Natural killer cell (primary cell): ENCODE measurements at regions of chr10 and their contacts with region 1.

Region 1: DNA sequence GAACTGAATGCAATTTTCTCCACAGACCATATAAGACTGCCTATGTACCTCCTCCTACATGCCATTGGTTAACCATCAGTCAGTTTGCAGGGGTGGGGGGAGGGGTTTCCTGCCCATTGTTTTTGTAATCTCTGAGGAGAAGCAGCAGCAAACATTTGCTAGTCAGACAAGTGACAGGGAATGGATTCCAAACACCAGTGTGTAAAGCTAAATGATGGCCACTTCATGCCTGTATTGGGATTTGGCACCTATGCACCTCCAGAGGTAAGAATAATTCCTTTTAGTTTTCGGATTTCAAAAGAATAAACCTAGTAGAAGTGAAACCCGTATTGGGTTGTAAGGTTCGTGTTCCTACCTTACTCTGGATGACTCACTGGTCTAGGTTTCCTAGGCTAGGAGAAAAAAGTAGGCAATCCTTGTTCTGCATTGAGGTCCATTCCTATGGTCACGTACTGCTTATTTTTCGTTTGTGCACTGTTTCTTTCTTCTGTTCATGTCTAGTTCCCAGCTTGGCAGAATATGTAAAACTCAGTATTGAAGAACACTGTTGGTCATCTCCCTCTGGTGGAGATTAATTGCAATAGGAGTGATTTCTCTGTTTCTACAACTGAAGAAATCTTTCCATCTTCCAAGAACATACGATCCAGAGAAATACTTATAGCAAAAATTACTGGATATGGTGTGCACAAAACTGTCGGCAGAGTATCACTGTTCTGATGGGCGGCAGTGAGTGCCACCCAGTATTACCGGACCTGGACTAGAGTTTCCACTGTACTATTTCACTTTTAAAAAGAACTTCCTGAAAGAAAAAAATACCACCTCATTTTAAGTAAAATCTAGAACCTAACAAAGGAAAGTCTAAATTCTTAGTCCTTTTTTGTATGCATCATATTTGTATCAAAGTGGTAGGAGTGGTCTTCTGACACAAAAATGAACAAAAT is at the start of gene AKR1C3:
- DNase-seq: peak in 1 of 2 donors; percentile 59
- ATAC-seq: peak; percentile 73 to 84 (median 81)
- H3K4me3 ChIP-seq: peak within 1 kb of the TSS; percentile 63
- H3K4me3 Mint-ChIP-seq: peak within 1 kb of the TSS; percentile 98
- H3K27ac ChIP-seq: peak within 1 kb of the TSS; percentile 47
- H3K27ac Mint-ChIP-seq: peak within 1 kb of the TSS; percentile 89 to 94
- H3K4me1 ChIP-seq: no peaks in the 10 kb centered on the region
- H3K4me1 Mint-ChIP-seq: peaks cover 45 to 52% of the 10 kb centered on the region in 2 donors
- H3K27me3 ChIP-seq: no peaks in the 10 kb centered on the region
- H3K27me3 Mint-ChIP-seq: peaks cover 1 to 3% of the 10 kb centered on the region in 2 donors
- CTCF ChIP-seq: peak; percentile 69
- total RNA-seq, gene AKR1C3: 77.5 to 140 (median 137) TPM

Region 2: GRCh38 chr10:5064656-5065055 is 29.9 kb before region 1 on chr10:
- intact Hi-C with region 1: no loop called
- DNase-seq: no peak
- ATAC-seq: no peak
- H3K4me3 ChIP-seq: no peak overlapping the region
- H3K4me3 Mint-ChIP-seq: no peak overlapping the region
- H3K27ac ChIP-seq: no peak overlapping the region
- H3K27ac Mint-ChIP-seq: no peak overlapping the region
- H3K4me1 ChIP-seq: no peaks in the 10 kb centered on the region
- H3K4me1 Mint-ChIP-seq: no peaks in the 10 kb centered on the region
- H3K27me3 ChIP-seq: no peaks in the 10 kb centered on the region
- H3K27me3 Mint-ChIP-seq: peaks cover 0 to 3% of the 10 kb centered on the region in 2 donors
- CTCF ChIP-seq: no peak

Region 3: DNA sequence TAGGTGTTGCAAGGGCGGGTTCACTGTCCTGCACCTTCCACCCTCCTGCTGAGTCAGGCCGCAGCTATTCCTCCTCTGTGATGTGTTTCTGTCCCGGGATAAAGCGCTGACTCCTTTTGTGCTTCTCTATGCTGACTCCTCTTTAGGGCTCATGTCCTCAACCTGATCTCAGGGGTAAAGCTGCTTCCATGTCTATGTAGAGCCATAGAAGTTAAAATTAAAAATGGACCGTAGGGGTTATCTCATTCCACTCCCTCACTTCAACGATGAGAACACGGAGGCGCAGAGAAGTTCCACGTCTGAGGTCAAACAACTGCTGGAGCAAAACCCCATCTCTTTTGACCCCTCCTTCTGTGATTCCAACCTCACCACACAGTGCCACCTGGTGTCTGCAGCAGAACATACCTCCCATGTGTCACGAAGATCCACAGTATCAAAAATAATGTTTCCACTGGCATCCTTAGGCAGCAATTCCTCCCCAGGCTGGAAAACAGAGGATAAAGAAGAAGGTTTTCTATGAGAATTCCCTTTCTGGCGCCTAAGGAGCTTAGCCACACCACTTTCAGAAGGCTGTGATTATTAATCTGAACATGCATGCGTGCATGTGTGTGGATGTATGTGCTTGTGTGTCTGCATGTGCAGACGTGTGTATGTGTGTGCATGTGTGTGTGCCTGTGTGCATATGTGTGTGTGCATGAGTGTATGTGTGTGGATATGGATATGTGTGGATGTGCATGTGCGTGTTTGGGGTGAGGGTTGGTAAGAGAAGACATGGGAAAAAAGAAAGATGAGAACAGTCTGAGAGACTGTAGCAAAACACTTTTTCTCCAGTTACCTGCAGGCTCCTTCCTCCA is 189.0 kb after region 1 on chr10:
- intact Hi-C with region 1: loop called (anchors 1 kb)
- DNase-seq: peak; percentile 57 to 78
- ATAC-seq: peak; percentile 84 to 93 (median 84)
- H3K4me3 ChIP-seq: no peak overlapping the region
- H3K4me3 Mint-ChIP-seq: peak overlapping the region; percentile 86
- H3K27ac ChIP-seq: peak overlapping the region; percentile 52
- H3K27ac Mint-ChIP-seq: peak overlapping the region; percentile 85 to 92
- H3K4me1 ChIP-seq: peaks cover 16% of the 10 kb centered on the region
- H3K4me1 Mint-ChIP-seq: peaks cover 42 to 45% of the 10 kb centered on the region in 2 donors
- H3K27me3 ChIP-seq: no peaks in the 10 kb centered on the region
- H3K27me3 Mint-ChIP-seq: no peaks in the 10 kb centered on the region
- CTCF ChIP-seq: peak; percentile 76

Region 4: DNA sequence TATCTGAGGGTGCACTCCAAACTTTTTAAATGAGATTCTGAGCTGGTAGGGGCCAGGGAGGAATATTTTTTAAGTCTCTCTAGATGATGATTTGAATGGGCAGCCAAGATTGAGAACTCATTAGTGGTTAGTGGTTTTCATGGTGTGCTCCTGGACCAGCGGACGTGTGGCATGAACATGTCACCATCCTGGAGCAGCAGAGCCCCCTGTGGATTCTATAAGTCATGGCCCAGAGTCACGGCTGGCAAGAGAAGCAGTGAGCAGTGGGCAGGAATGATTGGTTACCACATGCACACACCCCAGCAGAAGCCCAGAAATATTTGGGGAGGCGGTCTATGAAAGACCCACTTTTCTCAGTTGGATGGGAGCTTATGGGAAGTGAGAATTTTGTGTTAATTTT is 249.0 kb after region 1 on chr10:
- intact Hi-C with region 1: loop called (anchors 5 kb)
- DNase-seq: peak in 1 of 2 donors; percentile 44
- ATAC-seq: peak; percentile 71 to 89 (median 81)
- H3K4me3 ChIP-seq: no peak overlapping the region
- H3K4me3 Mint-ChIP-seq: no peak overlapping the region
- H3K27ac ChIP-seq: no peak overlapping the region
- H3K27ac Mint-ChIP-seq: peak overlapping the region in 1 of 2 donors; percentile 29
- H3K4me1 ChIP-seq: peaks cover 4% of the 10 kb centered on the region
- H3K4me1 Mint-ChIP-seq: peaks cover 25 to 27% of the 10 kb centered on the region in 2 donors
- H3K27me3 ChIP-seq: no peaks in the 10 kb centered on the region
- H3K27me3 Mint-ChIP-seq: no peaks in the 10 kb centered on the region
- CTCF ChIP-seq: peak; percentile 44

Region 5: GRCh38 chr10:5385224-5385623 is 290.7 kb after region 1 on chr10:
- intact Hi-C with region 1: loop called (anchors 1 kb)
- DNase-seq: no peak
- ATAC-seq: no peak
- H3K4me3 ChIP-seq: no peak overlapping the region
- H3K4me3 Mint-ChIP-seq: no peak overlapping the region
- H3K27ac ChIP-seq: no peak overlapping the region
- H3K27ac Mint-ChIP-seq: no peak overlapping the region
- H3K4me1 ChIP-seq: no peaks in the 10 kb centered on the region
- H3K4me1 Mint-ChIP-seq: no peaks in the 10 kb centered on the region
- H3K27me3 ChIP-seq: no peaks in the 10 kb centered on the region
- H3K27me3 Mint-ChIP-seq: no peaks in the 10 kb centered on the region
- CTCF ChIP-seq: no peak